ENCODE measurements at regions of chr7 and their contacts with region 1.

Region 1: DNA sequence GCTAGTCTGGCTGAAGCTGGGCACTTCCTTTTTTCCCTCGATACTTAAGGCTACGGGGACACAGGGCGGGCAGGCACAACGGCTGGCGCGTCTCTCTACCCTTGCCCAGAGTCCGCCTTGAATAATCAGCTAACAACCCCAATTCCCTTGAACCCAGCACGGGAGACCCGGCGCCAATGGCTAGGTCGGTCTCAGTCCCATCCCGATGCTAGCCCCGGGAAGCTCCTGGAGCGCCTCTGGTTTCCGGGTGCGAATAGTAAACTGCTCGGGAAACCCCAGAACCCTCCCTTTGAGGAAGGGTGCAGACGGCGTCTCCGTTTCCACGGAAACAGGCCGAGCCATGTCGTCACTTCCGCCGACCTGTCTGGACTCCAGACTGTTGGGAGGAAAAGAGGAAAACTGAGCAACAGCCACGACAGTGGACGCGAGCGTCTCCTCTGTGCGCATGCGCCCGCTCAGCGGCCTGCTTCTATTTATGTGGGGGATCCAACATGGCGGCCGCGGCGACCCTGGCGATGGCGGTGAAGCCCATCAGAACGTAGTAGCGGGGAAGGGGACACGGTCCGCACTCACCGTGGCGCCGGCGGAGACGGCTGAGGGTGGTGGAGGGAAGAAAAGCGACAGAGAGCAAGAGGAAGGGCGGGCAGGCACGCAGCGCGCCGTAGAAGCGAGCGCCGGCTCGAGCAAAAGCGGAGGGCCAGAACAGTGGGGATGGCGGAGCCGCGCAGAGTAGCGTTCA is at the start of gene UBN2:
- DNase-seq: peak; percentile 65 to 96 (median 89)
- ATAC-seq: peak; percentile 72
- H3K4me3 ChIP-seq: peak within 1 kb of the TSS; percentile 73 to 86
- H3K4me3 Mint-ChIP-seq: peak within 1 kb of the TSS; percentile 99
- H3K27ac ChIP-seq: peak within 1 kb of the TSS; percentile 68 to 81
- H3K27ac Mint-ChIP-seq: peak within 1 kb of the TSS; percentile 97
- H3K4me1 ChIP-seq: peaks cover 20% of the 10 kb centered on the region
- H3K4me1 Mint-ChIP-seq: peaks cover 33% of the 10 kb centered on the region
- H3K27me3 ChIP-seq: no peaks in the 10 kb centered on the region
- H3K27me3 Mint-ChIP-seq: peaks cover 5% of the 10 kb centered on the region
- CTCF ChIP-seq: no peak
- total RNA-seq, gene UBN2: 12.2 to 13.0 TPM

Region 2: GRCh38 chr7:137760111-137760510 is 1470.8 kb before region 1 on chr7:
- CTCF ChIA-PET with region 1: no interaction called
- POLR2A ChIA-PET with region 1: no interaction called
- intact Hi-C with region 1: no loop called
- DNase-seq: no peak
- ATAC-seq: no peak
- H3K4me3 ChIP-seq: no peak overlapping the region
- H3K4me3 Mint-ChIP-seq: no peak overlapping the region
- H3K27ac ChIP-seq: no peak overlapping the region
- H3K27ac Mint-ChIP-seq: no peak overlapping the region
- H3K4me1 ChIP-seq: no peaks in the 10 kb centered on the region
- H3K4me1 Mint-ChIP-seq: no peaks in the 10 kb centered on the region
- H3K27me3 ChIP-seq: no peaks in the 10 kb centered on the region
- H3K27me3 Mint-ChIP-seq: peaks cover 5% of the 10 kb centered on the region
- CTCF ChIP-seq: no peak

Region 3: GRCh38 chr7:137992550-137993394 is 1238.2 kb before region 1 on chr7:
- CTCF ChIA-PET with region 1: no interaction called
- POLR2A ChIA-PET with region 1: no interaction called
- intact Hi-C with region 1: loop called in 1 of 2 experiments (anchors 5 kb)
- DNase-seq: no peak
- ATAC-seq: no peak
- H3K4me3 ChIP-seq: no peak overlapping the region
- H3K4me3 Mint-ChIP-seq: no peak overlapping the region
- H3K27ac ChIP-seq: no peak overlapping the region
- H3K27ac Mint-ChIP-seq: no peak overlapping the region
- H3K4me1 ChIP-seq: no peaks in the 10 kb centered on the region
- H3K4me1 Mint-ChIP-seq: peaks cover 30% of the 10 kb centered on the region
- H3K27me3 ChIP-seq: no peaks in the 10 kb centered on the region
- H3K27me3 Mint-ChIP-seq: no peaks in the 10 kb centered on the region
- CTCF ChIP-seq: no peak

Region 4: DNA sequence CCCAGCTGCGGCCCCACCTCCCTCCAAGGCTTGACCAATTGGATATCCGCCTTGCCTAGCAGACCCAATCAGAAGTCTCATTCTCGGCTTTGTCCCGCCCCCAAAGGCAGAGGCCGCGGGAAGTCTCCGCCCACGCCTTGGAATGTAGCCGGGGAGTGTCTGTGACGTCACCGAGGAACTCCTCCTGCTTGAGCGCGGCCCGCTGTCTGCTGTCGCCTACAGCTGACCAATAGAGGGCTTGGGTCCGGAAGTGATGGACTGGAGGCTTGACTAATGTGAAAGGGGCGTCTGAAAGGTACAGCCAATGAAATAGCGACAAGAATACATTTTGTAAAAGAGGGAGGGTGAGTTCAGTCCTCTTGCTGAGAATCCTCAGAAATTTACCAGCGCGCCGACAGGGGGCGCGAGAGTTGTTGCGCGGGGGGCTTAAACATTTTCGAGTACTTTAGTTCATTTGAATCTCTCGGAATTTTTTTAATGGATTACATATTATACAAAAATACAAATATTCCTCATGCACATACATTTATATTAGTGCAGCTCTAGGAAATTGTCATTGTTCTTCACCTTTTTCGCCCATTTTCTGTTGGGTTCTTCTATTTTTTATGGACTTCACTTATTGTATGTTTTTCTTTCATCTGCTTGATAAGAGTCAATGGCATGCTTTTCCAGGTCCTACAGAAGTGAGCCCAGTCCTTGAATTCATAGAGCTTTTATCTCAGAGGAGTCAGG is 1228.7 kb before region 1 on chr7:
- CTCF ChIA-PET with region 1: no interaction called
- POLR2A ChIA-PET with region 1: no interaction called
- intact Hi-C with region 1: loop called (anchors 5 to 10 kb)
- DNase-seq: peak; percentile 96 to 100 (median 98)
- ATAC-seq: peak; percentile 88
- H3K4me3 ChIP-seq: peak overlapping the region; percentile 81 to 97
- H3K4me3 Mint-ChIP-seq: peak overlapping the region; percentile 90
- H3K27ac ChIP-seq: peak overlapping the region; percentile 72 to 85
- H3K27ac Mint-ChIP-seq: peak overlapping the region; percentile 91
- H3K4me1 ChIP-seq: peaks cover 11% of the 10 kb centered on the region
- H3K4me1 Mint-ChIP-seq: peaks cover 33% of the 10 kb centered on the region
- H3K27me3 ChIP-seq: no peaks in the 10 kb centered on the region
- H3K27me3 Mint-ChIP-seq: no peaks in the 10 kb centered on the region
- CTCF ChIP-seq: peak; percentile 96

Region 5: GRCh38 chr7:138898255-138898654 is 332.7 kb before region 1 on chr7:
- CTCF ChIA-PET with region 1: no interaction called
- POLR2A ChIA-PET with region 1: no interaction called
- intact Hi-C with region 1: loop called in 1 of 2 experiments (anchors 10 kb)
- DNase-seq: peak in 6 of 9 experiments; percentile 10 to 52 (median 36)
- ATAC-seq: peak; percentile 73
- H3K4me3 ChIP-seq: no peak overlapping the region
- H3K4me3 Mint-ChIP-seq: no peak overlapping the region
- H3K27ac ChIP-seq: no peak overlapping the region
- H3K27ac Mint-ChIP-seq: no peak overlapping the region
- H3K4me1 ChIP-seq: peaks cover 26% of the 10 kb centered on the region
- H3K4me1 Mint-ChIP-seq: peaks cover 42% of the 10 kb centered on the region
- H3K27me3 ChIP-seq: peaks cover 0 to 2% of the 10 kb centered on the region in 2 experiments
- H3K27me3 Mint-ChIP-seq: peaks cover 32% of the 10 kb centered on the region
- CTCF ChIP-seq: no peak

Region 6: GRCh38 chr7:139109188-139109982 is 121.6 kb before region 1 on chr7 and contains the start of gene ZC3HAV1:
- CTCF ChIA-PET with region 1: no interaction called
- POLR2A ChIA-PET with region 1: interaction called, 3 read pairs
- intact Hi-C with region 1: loop called (anchors 2 to 5 kb)
- DNase-seq: peak; percentile 78 to 97 (median 89)
- ATAC-seq: peak; percentile 87
- H3K4me3 ChIP-seq: peak within 1 kb of the TSS; percentile 81 to 99
- H3K4me3 Mint-ChIP-seq: peak within 1 kb of the TSS; percentile 96
- H3K27ac ChIP-seq: peak within 1 kb of the TSS; percentile 97 to 98
- H3K27ac Mint-ChIP-seq: peak within 1 kb of the TSS; percentile 99
- H3K4me1 ChIP-seq: peaks cover 18% of the 10 kb centered on the region
- H3K4me1 Mint-ChIP-seq: peaks cover 42% of the 10 kb centered on the region
- H3K27me3 ChIP-seq: no peaks in the 10 kb centered on the region
- H3K27me3 Mint-ChIP-seq: no peaks in the 10 kb centered on the region
- CTCF ChIP-seq: no peak
- total RNA-seq, gene ZC3HAV1: 194 to 198 TPM

Region 7: DNA sequence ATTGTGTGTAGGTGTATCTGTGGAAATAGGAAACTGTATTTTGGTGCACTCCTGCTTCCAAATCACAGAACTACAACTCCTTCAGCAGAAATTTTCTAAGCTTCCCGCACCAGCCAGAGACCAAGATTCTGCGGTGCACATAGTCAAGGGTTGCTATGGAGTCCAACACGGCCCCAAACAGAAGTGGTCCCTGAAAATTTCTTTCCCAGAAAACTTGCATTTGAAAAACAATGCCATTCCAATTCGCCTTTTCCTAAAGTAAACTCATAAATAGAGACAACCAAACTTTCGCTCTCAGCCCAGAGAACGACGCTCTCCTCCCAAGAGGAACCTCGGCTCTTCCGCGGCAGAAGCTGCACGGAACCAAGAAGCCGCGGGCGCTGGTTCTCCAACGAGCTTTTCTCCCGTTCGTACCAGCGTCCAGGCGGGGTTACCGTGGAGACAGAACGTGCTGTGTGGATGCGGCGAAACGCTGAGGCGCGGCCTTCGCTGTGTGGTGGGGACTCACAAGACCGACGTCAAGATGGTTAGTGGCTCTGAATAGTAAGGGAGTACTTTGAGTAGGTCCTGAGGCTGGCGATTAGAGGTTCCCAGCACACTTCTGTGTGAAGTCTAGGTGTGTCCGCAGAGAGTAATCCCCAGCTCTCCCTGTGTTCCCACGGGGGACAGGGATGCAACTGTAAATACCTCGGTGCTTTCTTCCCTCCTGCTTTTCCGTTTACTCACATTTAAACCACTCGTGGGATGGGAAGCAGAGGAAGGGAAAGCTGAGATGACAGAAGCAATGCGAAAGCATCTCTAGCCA is 97.4 kb before region 1 on chr7:
- CTCF ChIA-PET with region 1: interaction called, 4 read pairs
- POLR2A ChIA-PET with region 1: interaction called, 6 read pairs
- intact Hi-C with region 1: loop called (anchors 1 to 2 kb)
- DNase-seq: peak; percentile 81 to 94 (median 89)
- ATAC-seq: peak; percentile 98
- H3K4me3 ChIP-seq: peak overlapping the region; percentile 60 to 63
- H3K4me3 Mint-ChIP-seq: peak overlapping the region; percentile 87
- H3K27ac ChIP-seq: peak overlapping the region; percentile 62 to 63
- H3K27ac Mint-ChIP-seq: peak overlapping the region; percentile 83
- H3K4me1 ChIP-seq: peaks cover 7% of the 10 kb centered on the region
- H3K4me1 Mint-ChIP-seq: peaks cover 13% of the 10 kb centered on the region
- H3K27me3 ChIP-seq: no peaks in the 10 kb centered on the region
- H3K27me3 Mint-ChIP-seq: no peaks in the 10 kb centered on the region
- CTCF ChIP-seq: no peak

Region 8: GRCh38 chr7:139340037-139340807 is 109.3 kb after region 1 on chr7:
- CTCF ChIA-PET with region 1: no interaction called
- POLR2A ChIA-PET with region 1: no interaction called
- intact Hi-C with region 1: loop called (anchors 1 to 5 kb)
- DNase-seq: peak; percentile 95 to 100 (median 97)
- ATAC-seq: peak; percentile 80
- H3K4me3 ChIP-seq: peak overlapping the region; percentile 69 to 85
- H3K4me3 Mint-ChIP-seq: peak overlapping the region; percentile 98
- H3K27ac ChIP-seq: peak overlapping the region; percentile 94 to 98
- H3K27ac Mint-ChIP-seq: peak overlapping the region; percentile 100
- H3K4me1 ChIP-seq: peaks cover 13% of the 10 kb centered on the region
- H3K4me1 Mint-ChIP-seq: peaks cover 32% of the 10 kb centered on the region
- H3K27me3 ChIP-seq: no peaks in the 10 kb centered on the region
- H3K27me3 Mint-ChIP-seq: peaks cover 2% of the 10 kb centered on the region
- CTCF ChIP-seq: peak; percentile 36

Region 9: DNA sequence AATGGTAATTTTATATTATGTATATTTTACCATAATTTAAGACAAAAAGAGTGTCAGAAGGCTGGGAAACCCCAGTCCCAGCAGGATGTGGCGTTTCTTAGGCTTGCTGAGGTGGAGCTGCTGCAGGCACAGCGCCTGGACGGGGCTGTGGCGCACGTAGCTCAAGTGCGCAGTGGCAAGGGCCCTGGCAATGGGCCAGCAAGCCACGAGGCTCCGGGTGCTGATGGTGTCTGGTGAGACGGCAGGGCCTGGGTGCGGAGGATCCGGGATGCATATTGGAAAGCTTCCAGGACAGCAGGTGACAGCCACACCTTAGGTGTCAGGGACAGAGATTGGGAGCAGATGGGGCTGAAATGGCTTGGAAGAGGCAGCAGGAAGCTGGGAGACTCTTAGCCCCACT is 329.7 kb after region 1 on chr7:
- CTCF ChIA-PET with region 1: no interaction called
- POLR2A ChIA-PET with region 1: no interaction called
- intact Hi-C with region 1: no loop called
- DNase-seq: no peak
- ATAC-seq: no peak
- H3K4me3 ChIP-seq: no peak overlapping the region
- H3K4me3 Mint-ChIP-seq: no peak overlapping the region
- H3K27ac ChIP-seq: no peak overlapping the region
- H3K27ac Mint-ChIP-seq: no peak overlapping the region
- H3K4me1 ChIP-seq: no peaks in the 10 kb centered on the region
- H3K4me1 Mint-ChIP-seq: peaks cover 8% of the 10 kb centered on the region
- H3K27me3 ChIP-seq: no peaks in the 10 kb centered on the region
- H3K27me3 Mint-ChIP-seq: peaks cover 11% of the 10 kb centered on the region
- CTCF ChIP-seq: no peak